K562 (cell line): ENCODE measurements at regions of chr12 and their contacts with region 1.

Region 1: GRCh38 chr12:64625243-64626077 is 15.2 kb downstream of the RASSF3 start:
- DNase-seq: peak; percentile 24 to 83 (median 49)
- ATAC-seq: peak; percentile 93
- H3K4me3 ChIP-seq: peak overlapping the region; percentile 27
- H3K27ac ChIP-seq: peak overlapping the region; percentile 93
- H3K4me1 ChIP-seq: peaks cover 11 to 20% of the 10 kb centered on the region in 2 experiments; a peak in 2 of 5 replicates
- H3K27me3 ChIP-seq: no peaks in the 10 kb centered on the region
- CTCF ChIP-seq: peak in 1 of 3 experiments; percentile 31; a peak in 1 of 6 replicates
- EP300 ChIP-seq: peak; percentile 46
- POLR2A ChIP-seq: peak; percentile 62
- RAD21 ChIP-seq: peak; percentile 21 to 29; a peak in 3 of 4 replicates

Region 2: GRCh38 chr12:64583771-64584421 is 41.6 kb before region 1 on chr12:
- CTCF ChIA-PET with region 1: no interaction called
- POLR2A ChIA-PET with region 1: no interaction called
- in situ Hi-C with region 1: no loop called
- intact Hi-C with region 1: no loop called
- DNase-seq: no peak
- ATAC-seq: no peak
- H3K4me3 ChIP-seq: no peak overlapping the region
- H3K27ac ChIP-seq: no peak overlapping the region
- H3K4me1 ChIP-seq: no peaks in the 10 kb centered on the region
- H3K27me3 ChIP-seq: peaks cover 6 to 7% of the 10 kb centered on the region in 2 experiments; a peak in 3 of 5 replicates
- CTCF ChIP-seq: no peak
- EP300 ChIP-seq: no peak
- POLR2A ChIP-seq: no peak
- RAD21 ChIP-seq: no peak

Region 3: GRCh38 chr12:64669270-64669842 is 43.9 kb after region 1 on chr12:
- CTCF ChIA-PET with region 1: no interaction called
- POLR2A ChIA-PET with region 1: interaction called, 3 read pairs
- in situ Hi-C with region 1: no loop called
- intact Hi-C with region 1: loop called (anchors 5 kb)
- DNase-seq: peak in 2 of 4 experiments; percentile 37 to 66
- ATAC-seq: peak; percentile 66
- H3K4me3 ChIP-seq: no peak overlapping the region
- H3K27ac ChIP-seq: peak overlapping the region; percentile 73
- H3K4me1 ChIP-seq: peaks cover 48 to 80% of the 10 kb centered on the region in 2 experiments
- H3K27me3 ChIP-seq: no peaks in the 10 kb centered on the region
- CTCF ChIP-seq: no peak
- EP300 ChIP-seq: no peak
- POLR2A ChIP-seq: no peak
- RAD21 ChIP-seq: no peak; a peak in 1 of 4 replicates

Region 4: GRCh38 chr12:64679487-64679983 is 54.1 kb after region 1 on chr12:
- CTCF ChIA-PET with region 1: no interaction called
- POLR2A ChIA-PET with region 1: no interaction called
- in situ Hi-C with region 1: no loop called
- intact Hi-C with region 1: no loop called
- DNase-seq: peak; percentile 65 to 82 (median 70)
- ATAC-seq: peak; percentile 93
- H3K4me3 ChIP-seq: no peak overlapping the region
- H3K27ac ChIP-seq: peak overlapping the region; percentile 51
- H3K4me1 ChIP-seq: peaks cover 24 to 32% of the 10 kb centered on the region in 2 experiments
- H3K27me3 ChIP-seq: no peaks in the 10 kb centered on the region
- CTCF ChIP-seq: no peak
- EP300 ChIP-seq: no peak
- POLR2A ChIP-seq: no peak
- RAD21 ChIP-seq: no peak

Region 5: DNA sequence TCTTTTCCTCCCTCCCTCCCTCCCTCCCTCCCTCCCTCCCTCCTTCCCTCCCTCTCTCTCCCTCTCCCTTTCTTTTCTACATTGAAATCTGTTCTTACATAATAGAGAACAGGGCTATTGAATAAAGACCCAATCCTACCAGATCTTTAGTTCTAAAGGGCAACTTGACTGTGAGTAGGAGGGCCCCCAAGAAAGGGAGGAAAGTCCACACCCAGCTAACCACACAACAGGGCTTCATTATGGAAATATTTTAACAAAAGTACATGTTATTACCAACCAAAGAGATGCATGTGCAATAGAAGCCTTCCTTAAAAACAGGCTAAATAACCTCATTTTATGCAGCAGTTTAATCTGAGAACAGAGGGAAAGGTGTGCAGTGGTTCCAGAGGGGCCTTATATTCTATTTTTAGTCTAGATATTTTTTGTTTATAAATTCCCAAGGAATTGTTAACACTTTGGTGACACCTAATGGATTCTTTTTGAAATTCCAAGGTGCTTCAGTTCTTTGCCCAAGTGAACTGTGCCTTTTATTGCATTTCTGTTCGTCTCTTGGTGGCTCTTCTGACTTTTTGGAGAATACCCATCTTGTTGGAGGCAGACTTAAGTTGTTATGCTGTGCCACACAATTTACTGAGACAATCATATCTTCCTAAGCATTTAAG is 70.8 kb after region 1 on chr12:
- CTCF ChIA-PET with region 1: no interaction called
- POLR2A ChIA-PET with region 1: no interaction called
- in situ Hi-C with region 1: no loop called
- intact Hi-C with region 1: loop called (anchors 5 kb)
- DNase-seq: peak in 2 of 4 experiments; percentile 24 to 44
- ATAC-seq: peak; percentile 11; the same call in 1 of the 3 replicates
- H3K4me3 ChIP-seq: no peak overlapping the region
- H3K27ac ChIP-seq: no peak overlapping the region
- H3K4me1 ChIP-seq: peaks cover 14 to 17% of the 10 kb centered on the region in 2 experiments; a peak in 4 of 5 replicates
- H3K27me3 ChIP-seq: no peaks in the 10 kb centered on the region
- CTCF ChIP-seq: peak in 2 of 3 experiments; percentile 40 to 58; a peak in 3 of 6 replicates
- EP300 ChIP-seq: no peak
- POLR2A ChIP-seq: no peak
- RAD21 ChIP-seq: peak; percentile 73 to 82